IMR-90 (cell line): ENCODE measurements at regions of chr10 and their contacts with region 1.

Region 1: DNA sequence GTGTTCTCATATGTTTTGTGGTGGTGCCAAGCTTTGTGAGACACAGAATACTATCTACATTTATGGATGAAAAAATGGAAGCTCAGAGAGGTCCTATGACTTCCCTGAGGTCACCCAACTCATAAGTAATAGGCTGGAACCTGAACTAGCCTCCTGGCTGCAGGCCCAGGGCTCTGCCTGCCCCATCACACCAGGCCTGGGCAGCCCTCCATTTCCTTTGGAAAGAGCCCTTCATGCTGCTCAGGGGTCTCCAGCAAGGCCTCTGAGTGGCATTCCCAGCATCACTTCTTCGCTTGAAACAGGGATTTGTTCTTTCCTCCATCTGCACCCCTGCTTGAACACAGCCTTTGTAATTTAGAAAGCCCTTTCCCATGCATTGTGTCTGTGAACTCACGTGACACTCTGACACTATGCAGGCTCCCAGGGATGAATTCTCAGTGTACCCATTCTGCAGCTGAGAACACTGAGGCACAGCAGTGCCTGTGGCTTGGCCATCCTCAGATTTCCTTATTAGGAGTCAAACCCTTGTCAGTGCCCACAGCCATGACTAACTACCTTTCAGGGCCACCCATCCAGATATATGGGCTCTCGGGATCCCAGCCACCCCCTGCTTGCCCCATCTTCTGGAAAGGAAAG is 127.8 kb upstream of the PPIF start:
- DNase-seq: peak; percentile 52
- ATAC-seq: no peak
- H3K4me3 ChIP-seq: no peak overlapping the region
- H3K27ac ChIP-seq: peak overlapping the region; percentile 10; the same call in 1 of the 2 replicates
- H3K4me1 ChIP-seq: peaks cover 44% of the 10 kb centered on the region
- H3K27me3 ChIP-seq: no peaks in the 10 kb centered on the region
- CTCF ChIP-seq: no peak
- POLR2A ChIP-seq: no peak
- RAD21 ChIP-seq: no peak

Region 2: GRCh38 chr10:79166312-79166721 is 53.1 kb before region 1 on chr10:
- CTCF ChIA-PET with region 1: no interaction called
- POLR2A ChIA-PET with region 1: no interaction called
- dilution Hi-C with region 1: no loop called
- in situ Hi-C with region 1: no loop called
- intact Hi-C with region 1: no loop called
- DNase-seq: no peak
- ATAC-seq: no peak
- H3K4me3 ChIP-seq: no peak overlapping the region
- H3K27ac ChIP-seq: no peak overlapping the region
- H3K4me1 ChIP-seq: peaks cover 36% of the 10 kb centered on the region
- H3K27me3 ChIP-seq: no peaks in the 10 kb centered on the region
- CTCF ChIP-seq: no peak
- POLR2A ChIP-seq: no peak
- RAD21 ChIP-seq: no peak

Region 3: GRCh38 chr10:79202188-79203013 is 17.0 kb before region 1 on chr10:
- CTCF ChIA-PET with region 1: no interaction called
- POLR2A ChIA-PET with region 1: interaction called, 20 read pairs
- dilution Hi-C with region 1: no loop called
- in situ Hi-C with region 1: no loop called
- intact Hi-C with region 1: no loop called
- DNase-seq: peak; percentile 29
- ATAC-seq: peak; percentile 42
- H3K4me3 ChIP-seq: no peak overlapping the region
- H3K27ac ChIP-seq: no peak overlapping the region
- H3K4me1 ChIP-seq: 0 out of 2 replicates have a peak, but pooled peaks cover 3% of the 10 kb centered on the region
- H3K27me3 ChIP-seq: no peaks in the 10 kb centered on the region
- CTCF ChIP-seq: peak; percentile 55
- POLR2A ChIP-seq: no peak
- RAD21 ChIP-seq: peak; percentile 58